GM12878 (cell line): ENCODE measurements at regions of chr17 and their contacts with region 1.

Region 1: GRCh38 chr17:75345514-75346167 is 56.4 kb upstream of the SLC25A19 start:
- DNase-seq: peak; percentile 91
- ATAC-seq: peak; percentile 79
- H3K4me3 ChIP-seq: peak overlapping the region; percentile 62
- H3K27ac ChIP-seq: peak overlapping the region; percentile 85
- H3K4me1 ChIP-seq: peaks cover 68% of the 10 kb centered on the region
- H3K27me3 ChIP-seq: no peaks in the 10 kb centered on the region
- CTCF ChIP-seq: no peak
- EP300 ChIP-seq: peak; percentile 34 to 65; a peak in 1 of 4 replicates
- POLR2A ChIP-seq: no peak
- RAD21 ChIP-seq: 0 out of 2 replicates have a peak, but pooled peaks have one; percentile 25

Region 2: GRCh38 chr17:75325827-75326225 is 19.8 kb before region 1 on chr17:
- CTCF ChIA-PET with region 1: interaction called, 182 read pairs
- POLR2A ChIA-PET with region 1: interaction called, 13 read pairs
- RAD21 ChIA-PET with region 1: interaction called, 35 read pairs
- SMC1A ChIA-PET with region 1: interaction called, 83 read pairs
- in situ Hi-C with region 1: no loop called
- intact Hi-C with region 1: no loop called
- DNase-seq: no peak
- ATAC-seq: no peak
- H3K4me3 ChIP-seq: no peak overlapping the region
- H3K27ac ChIP-seq: peak overlapping the region; percentile 64
- H3K4me1 ChIP-seq: peaks cover 35% of the 10 kb centered on the region
- H3K27me3 ChIP-seq: no peaks in the 10 kb centered on the region
- CTCF ChIP-seq: no peak; a peak in 1 of 6 replicates
- EP300 ChIP-seq: no peak
- POLR2A ChIP-seq: no peak
- RAD21 ChIP-seq: peak; percentile 34; the same call in 1 of the 2 replicates

Region 3: DNA sequence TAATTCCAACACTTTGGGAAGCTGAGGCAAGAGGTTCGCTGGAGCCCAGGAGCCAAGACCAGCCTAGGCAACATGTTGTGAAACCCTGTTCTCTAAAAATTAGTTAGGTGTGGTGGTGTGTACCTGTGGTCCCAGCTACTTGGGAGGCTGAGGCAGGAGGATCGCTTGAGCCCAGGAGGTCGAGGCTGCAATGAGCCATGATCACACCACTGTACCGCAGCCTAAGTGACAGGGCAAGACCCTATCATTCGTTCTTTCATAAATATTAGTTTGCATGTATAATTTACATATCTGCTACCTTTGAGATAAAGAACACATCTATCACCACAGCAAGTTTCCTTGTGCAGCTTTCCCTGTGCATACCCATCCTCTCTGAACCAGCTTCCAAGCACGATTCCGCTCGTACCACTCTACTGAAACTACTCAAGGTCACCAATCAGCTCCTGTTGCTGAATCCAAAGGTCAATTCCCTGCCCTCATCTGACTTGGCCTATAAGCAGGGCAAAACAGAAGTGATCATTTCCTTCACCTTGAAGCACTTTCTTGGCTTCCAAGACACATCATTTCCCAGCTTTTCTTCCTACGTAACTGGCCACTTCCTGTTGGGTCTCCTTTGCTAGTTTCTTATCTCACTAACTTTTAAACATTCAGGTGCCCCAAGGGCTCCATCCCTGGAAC is 10.8 kb after region 1 on chr17:
- CTCF ChIA-PET with region 1: interaction called, 14 read pairs
- POLR2A ChIA-PET with region 1: interaction called, 64 read pairs
- RAD21 ChIA-PET with region 1: interaction called, 13 read pairs
- SMC1A ChIA-PET with region 1: interaction called, 125 read pairs
- in situ Hi-C with region 1: no loop called
- intact Hi-C with region 1: loop called (anchors 2 kb)
- DNase-seq: no peak
- ATAC-seq: no peak
- H3K4me3 ChIP-seq: no peak overlapping the region
- H3K27ac ChIP-seq: no peak overlapping the region
- H3K4me1 ChIP-seq: peaks cover 25% of the 10 kb centered on the region
- H3K27me3 ChIP-seq: no peaks in the 10 kb centered on the region
- CTCF ChIP-seq: no peak
- EP300 ChIP-seq: no peak
- POLR2A ChIP-seq: no peak
- RAD21 ChIP-seq: no peak

Region 4: DNA sequence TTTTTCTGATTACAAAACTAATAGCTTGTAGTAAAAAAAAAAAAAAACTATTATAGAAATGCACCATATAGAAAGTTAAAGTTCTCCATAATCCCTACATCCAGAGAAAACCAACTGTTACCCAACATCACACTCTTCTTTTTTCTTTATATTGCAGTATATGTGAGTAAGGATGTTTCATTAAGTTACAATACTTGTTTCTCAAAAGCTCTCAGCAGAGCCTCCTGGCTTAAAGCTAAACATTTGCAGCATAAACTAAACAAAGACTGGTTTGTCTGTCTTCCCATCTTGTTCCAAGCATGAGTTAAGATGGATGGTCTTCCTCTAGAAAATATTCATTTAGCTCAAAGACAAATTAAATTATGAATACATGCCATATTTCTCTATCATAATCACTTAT is 34.7 kb after region 1 on chr17:
- CTCF ChIA-PET with region 1: interaction called, 5 read pairs
- POLR2A ChIA-PET with region 1: interaction called, 19 read pairs
- RAD21 ChIA-PET with region 1: interaction called, 9 read pairs
- SMC1A ChIA-PET with region 1: interaction called, 31 read pairs
- in situ Hi-C with region 1: no loop called
- intact Hi-C with region 1: no loop called
- DNase-seq: no peak
- ATAC-seq: no peak
- H3K4me3 ChIP-seq: no peak overlapping the region
- H3K27ac ChIP-seq: no peak overlapping the region
- H3K4me1 ChIP-seq: peaks cover 6% of the 10 kb centered on the region; the same call in 1 of the 2 replicates
- H3K27me3 ChIP-seq: no peaks in the 10 kb centered on the region
- CTCF ChIP-seq: no peak
- EP300 ChIP-seq: no peak
- POLR2A ChIP-seq: no peak
- RAD21 ChIP-seq: no peak

Region 5: GRCh38 chr17:75400326-75400939 is 54.8 kb after region 1 on chr17:
- CTCF ChIA-PET with region 1: interaction called, 10 read pairs
- POLR2A ChIA-PET with region 1: interaction called, 44 read pairs
- RAD21 ChIA-PET with region 1: interaction called, 23 read pairs
- SMC1A ChIA-PET with region 1: interaction called, 93 read pairs
- in situ Hi-C with region 1: no loop called
- intact Hi-C with region 1: no loop called
- DNase-seq: no peak
- ATAC-seq: no peak
- H3K4me3 ChIP-seq: peak overlapping the region; percentile 52
- H3K27ac ChIP-seq: no peak overlapping the region
- H3K4me1 ChIP-seq: peaks cover 24% of the 10 kb centered on the region; the same call in 1 of the 2 replicates
- H3K27me3 ChIP-seq: no peaks in the 10 kb centered on the region
- CTCF ChIP-seq: no peak
- EP300 ChIP-seq: no peak
- POLR2A ChIP-seq: no peak
- RAD21 ChIP-seq: no peak